Right cardiac atrium (tissue), 5 donors: ENCODE measurements at regions of chr15 and their contacts with region 1.

Region 1: GRCh38 chr15:34132881-34133280 is 31.0 kb downstream of the PGBD4 start:
- DNase-seq: no peak
- ATAC-seq: no peak
- H3K4me3 ChIP-seq: no peak overlapping the region
- H3K27ac ChIP-seq: no peak overlapping the region
- H3K4me1 ChIP-seq: no peaks in the 10 kb centered on the region
- H3K27me3 ChIP-seq: no peaks in the 10 kb centered on the region

Region 2: GRCh38 chr15:34182942-34183341 is 50.1 kb after region 1 on chr15:
- intact Hi-C with region 1: loop called in 1 of 4 experiments (anchors 10 kb)
- DNase-seq: no peak
- ATAC-seq: no peak
- H3K4me3 ChIP-seq: no peak overlapping the region
- H3K27ac ChIP-seq: no peak overlapping the region
- H3K4me1 ChIP-seq: no peaks in the 10 kb centered on the region
- H3K27me3 ChIP-seq: no peaks in the 10 kb centered on the region

Region 3: GRCh38 chr15:34490417-34491193 is 357.7 kb after region 1 on chr15:
- intact Hi-C with region 1: no loop called
- DNase-seq: peak in 2 of 3 donors; percentile 24 to 42
- ATAC-seq: no peak
- H3K4me3 ChIP-seq: no peak overlapping the region
- H3K27ac ChIP-seq: no peak overlapping the region
- H3K4me1 ChIP-seq: no peaks in the 10 kb centered on the region
- H3K27me3 ChIP-seq: no peaks in the 10 kb centered on the region